Posterior vena cava (tissue), 2 donors: ENCODE measurements at regions of chr4 and their contacts with region 1.

Region 1: DNA sequence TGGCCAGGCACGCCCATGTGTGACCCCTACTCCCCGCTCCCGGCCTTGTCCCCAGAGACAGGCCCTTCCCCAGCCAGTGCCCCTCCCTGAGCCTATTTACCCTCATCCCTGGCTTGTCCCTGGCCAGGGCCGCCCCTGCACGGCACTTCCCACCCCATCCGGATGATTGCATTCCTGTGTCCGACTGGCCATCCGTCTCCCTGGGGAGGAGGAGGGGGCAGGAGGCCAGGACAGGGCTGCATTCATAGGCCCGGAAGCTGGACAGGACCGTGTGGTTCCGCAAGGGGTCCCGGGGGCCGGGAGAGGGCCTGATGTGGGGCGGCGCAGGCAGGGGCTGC is 22.8 kb downstream of the CTBP1 start:
- DNase-seq: no peak

Region 2: GRCh38 chr4:1241466-1242140 is 15.5 kb after region 1 on chr4:
- intact Hi-C with region 1: loop called in 1 of 2 experiments (anchors 1 kb)
- DNase-seq: peak; percentile 61

Region 3: GRCh38 chr4:1318488-1319213 is 92.5 kb after region 1 on chr4:
- intact Hi-C with region 1: no loop called
- DNase-seq: peak; percentile 77

Region 4: DNA sequence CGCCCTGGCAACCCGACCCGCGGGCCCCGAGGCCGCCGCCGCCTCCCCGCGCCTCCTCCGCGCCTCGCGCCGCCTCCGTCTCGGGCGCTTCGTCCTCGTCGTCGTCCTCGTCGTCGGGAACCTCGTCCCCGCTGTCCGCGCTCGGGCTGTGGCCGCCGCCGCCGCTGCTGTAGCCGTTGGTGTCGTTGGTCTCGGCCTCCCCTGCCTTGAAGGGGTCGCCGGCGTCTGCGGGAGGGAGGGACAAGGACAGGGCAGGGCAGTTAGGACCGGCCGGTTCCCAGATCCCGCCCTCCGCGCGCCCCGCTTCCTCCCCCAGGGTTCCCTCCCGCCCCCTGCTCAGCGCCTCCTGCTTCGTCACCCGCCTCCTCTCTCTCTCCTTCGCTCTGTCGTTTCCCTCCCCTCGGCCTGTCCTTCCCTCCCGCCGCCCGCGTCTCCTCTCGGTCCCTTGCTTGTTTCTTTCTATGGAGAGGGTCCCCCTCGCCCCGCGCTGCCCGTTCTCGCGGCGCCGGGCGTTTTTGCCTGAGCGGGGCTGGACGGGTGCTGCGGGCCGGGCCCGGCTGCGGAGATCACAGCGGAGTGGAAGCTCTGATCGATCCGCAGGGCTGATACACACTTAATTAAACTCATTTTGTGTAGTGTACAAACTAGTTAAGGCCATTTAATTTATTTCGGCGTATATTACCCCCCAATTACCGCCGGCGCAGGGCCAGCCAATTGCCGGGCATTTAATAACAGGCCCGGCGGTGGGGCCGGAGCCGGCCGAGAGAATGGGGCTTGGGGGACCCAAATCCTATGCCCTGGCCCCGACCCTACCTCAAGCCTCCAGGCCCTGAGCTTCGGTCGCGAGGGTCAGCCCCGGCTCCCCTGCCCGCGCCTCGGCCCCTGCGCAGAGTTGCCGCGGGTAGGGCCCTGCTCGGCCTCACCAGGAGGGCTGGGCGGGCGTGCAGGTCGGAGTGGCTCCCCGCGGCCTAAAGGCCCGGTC is 177.8 kb after region 1 on chr4:
- intact Hi-C with region 1: no loop called
- DNase-seq: peak; percentile 77